ENCODE measurements at regions of chr2 and their contacts with region 1.

Region 1: GRCh38 chr2:124258140-124258880 is 233.2 kb downstream of the CNTNAP5 start:
- DNase-seq: peak; percentile 54
- H3K4me3 Mint-ChIP-seq: no peak overlapping the region
- H3K27ac Mint-ChIP-seq: no peak overlapping the region
- H3K4me1 Mint-ChIP-seq: peaks cover 30% of the 10 kb centered on the region
- H3K27me3 Mint-ChIP-seq: no peaks in the 10 kb centered on the region
- CTCF ChIP-seq: no peak

Region 2: DNA sequence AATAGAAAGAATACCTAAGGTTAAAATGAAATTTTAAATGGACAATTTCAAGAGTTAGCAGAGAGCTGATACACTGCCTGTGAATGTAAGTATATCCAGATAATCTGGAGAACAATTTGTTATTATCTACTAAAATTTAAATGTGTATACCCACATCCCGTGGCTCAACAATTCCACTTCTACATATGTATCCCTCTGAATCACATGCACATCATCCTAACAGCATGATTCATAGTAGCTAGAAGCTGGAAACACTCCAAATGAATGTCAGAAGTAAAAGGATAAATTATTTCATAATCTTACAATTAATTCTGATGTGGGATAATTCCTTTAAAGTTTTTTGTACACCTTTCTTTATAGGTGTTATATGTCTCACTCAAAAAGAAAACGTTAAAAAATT is 145.3 kb before region 1 on chr2:
- CTCF ChIA-PET with region 1: no interaction called
- POLR2A ChIA-PET with region 1: interaction called, 3 read pairs
- intact Hi-C with region 1: loop called (anchors 10 kb)
- DNase-seq: peak; percentile 72
- H3K4me3 Mint-ChIP-seq: no peak overlapping the region
- H3K27ac Mint-ChIP-seq: no peak overlapping the region
- H3K4me1 Mint-ChIP-seq: no peaks in the 10 kb centered on the region
- H3K27me3 Mint-ChIP-seq: no peaks in the 10 kb centered on the region
- CTCF ChIP-seq: no peak

Region 3: DNA sequence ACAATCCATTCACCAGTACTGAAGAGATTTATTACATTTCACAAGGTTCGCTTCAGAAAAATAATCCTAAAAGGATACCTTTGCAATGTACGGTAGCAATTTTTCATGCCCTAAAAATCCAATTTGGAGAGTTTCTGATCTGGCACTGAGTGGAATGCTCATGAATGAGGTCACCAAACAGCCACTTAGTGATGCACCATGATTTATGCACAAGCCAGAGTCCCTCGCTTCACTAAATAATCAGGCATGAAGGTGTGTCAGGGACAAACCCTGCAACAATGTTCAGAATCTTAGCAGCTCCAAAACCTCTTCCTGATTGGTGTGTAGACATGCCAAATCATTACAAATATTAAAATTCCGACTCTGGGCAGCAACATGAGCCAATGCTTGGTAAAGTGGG is 12.1 kb before region 1 on chr2:
- CTCF ChIA-PET with region 1: no interaction called
- POLR2A ChIA-PET with region 1: no interaction called
- intact Hi-C with region 1: no loop called
- DNase-seq: no peak
- H3K4me3 Mint-ChIP-seq: no peak overlapping the region
- H3K27ac Mint-ChIP-seq: no peak overlapping the region
- H3K4me1 Mint-ChIP-seq: peaks cover 23% of the 10 kb centered on the region
- H3K27me3 Mint-ChIP-seq: no peaks in the 10 kb centered on the region
- CTCF ChIP-seq: no peak

Region 4: DNA sequence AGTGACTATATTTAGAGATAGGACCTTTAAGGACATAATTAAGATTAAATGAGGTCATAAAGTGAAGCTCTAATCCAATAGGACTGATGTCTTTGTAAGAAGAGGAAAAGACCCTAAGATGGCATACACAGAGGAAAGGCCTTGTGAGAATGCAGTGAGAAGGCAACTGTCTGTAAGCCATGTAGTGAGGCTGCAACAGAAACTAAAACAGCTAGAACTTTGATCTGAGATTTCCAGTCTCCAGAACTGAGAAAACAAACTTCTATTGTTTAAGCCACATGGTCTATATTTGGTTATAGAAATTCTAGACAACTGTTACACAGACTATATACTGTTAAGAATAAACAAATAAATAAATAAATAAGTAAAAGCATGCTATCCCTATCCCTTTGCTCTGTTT is 43.6 kb after region 1 on chr2:
- CTCF ChIA-PET with region 1: no interaction called
- POLR2A ChIA-PET with region 1: no interaction called
- intact Hi-C with region 1: no loop called
- DNase-seq: no peak
- H3K4me3 Mint-ChIP-seq: no peak overlapping the region
- H3K27ac Mint-ChIP-seq: no peak overlapping the region
- H3K4me1 Mint-ChIP-seq: peaks cover 12% of the 10 kb centered on the region
- H3K27me3 Mint-ChIP-seq: no peaks in the 10 kb centered on the region
- CTCF ChIP-seq: no peak

Measured in MCF 10A (cell line).